Common myeloid progenitor, CD34-positive (primary cell): ENCODE measurements at regions of chr15 and their contacts with region 1.

Region 1: GRCh38 chr15:69729161-69729748 is 276.6 kb downstream of the RPLP1 start:
- DNase-seq: peak; percentile 41 to 63 (median 42)
- H3K4me3 ChIP-seq: no peak overlapping the region
- H3K27ac ChIP-seq: no peak overlapping the region
- H3K4me1 ChIP-seq: peaks cover 0 to 31% (median 12%) of the 10 kb centered on the region in 4 experiments
- H3K27me3 ChIP-seq: no peaks in the 10 kb centered on the region

Region 2: GRCh38 chr15:69751566-69751965 is 22.3 kb after region 1 on chr15:
- CTCF ChIA-PET with region 1: interaction called, 10 read pairs
- POLR2A ChIA-PET with region 1: no interaction called
- DNase-seq: no peak
- H3K4me3 ChIP-seq: no peak overlapping the region
- H3K27ac ChIP-seq: no peak overlapping the region
- H3K4me1 ChIP-seq: peaks cover 14 to 28% (median 17%) of the 10 kb centered on the region in 4 experiments
- H3K27me3 ChIP-seq: no peaks in the 10 kb centered on the region

Region 3: DNA sequence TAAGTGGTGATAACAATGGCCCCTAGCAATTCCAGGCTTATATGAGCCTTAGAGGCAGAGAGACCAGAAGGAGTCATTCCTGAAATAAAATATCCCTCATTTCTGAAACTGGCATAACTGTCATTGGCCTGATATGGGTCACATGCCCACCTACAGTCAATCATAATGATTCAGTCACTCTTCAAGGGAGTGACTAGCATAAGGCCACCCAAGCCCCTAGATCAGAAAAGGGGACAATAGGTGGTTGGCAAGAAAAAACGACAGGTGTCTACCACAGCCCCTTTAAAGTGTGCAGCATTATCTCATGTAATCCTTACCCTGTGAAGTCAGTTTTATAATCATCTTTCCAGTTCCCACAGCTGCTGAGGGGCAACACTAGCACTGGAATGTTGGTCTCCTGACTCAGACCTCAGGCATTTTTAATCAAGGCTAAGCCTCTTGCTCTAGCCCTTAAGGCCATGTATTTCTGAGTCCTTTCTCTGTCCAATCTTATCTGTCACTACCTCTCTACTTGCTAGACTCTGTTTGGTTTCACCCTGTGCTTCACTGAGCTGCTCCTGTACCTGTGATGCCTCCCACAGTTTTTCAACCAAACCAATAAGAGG is 196.7 kb after region 1 on chr15:
- CTCF ChIA-PET with region 1: no interaction called
- POLR2A ChIA-PET with region 1: no interaction called
- DNase-seq: no peak
- H3K4me3 ChIP-seq: no peak overlapping the region
- H3K27ac ChIP-seq: no peak overlapping the region
- H3K4me1 ChIP-seq: peaks cover 0 to 4% (median 0%) of the 10 kb centered on the region in 4 experiments
- H3K27me3 ChIP-seq: no peaks in the 10 kb centered on the region